IMR-90 (cell line): ENCODE measurements at regions of chr22 and their contacts with region 1.

Region 1: DNA sequence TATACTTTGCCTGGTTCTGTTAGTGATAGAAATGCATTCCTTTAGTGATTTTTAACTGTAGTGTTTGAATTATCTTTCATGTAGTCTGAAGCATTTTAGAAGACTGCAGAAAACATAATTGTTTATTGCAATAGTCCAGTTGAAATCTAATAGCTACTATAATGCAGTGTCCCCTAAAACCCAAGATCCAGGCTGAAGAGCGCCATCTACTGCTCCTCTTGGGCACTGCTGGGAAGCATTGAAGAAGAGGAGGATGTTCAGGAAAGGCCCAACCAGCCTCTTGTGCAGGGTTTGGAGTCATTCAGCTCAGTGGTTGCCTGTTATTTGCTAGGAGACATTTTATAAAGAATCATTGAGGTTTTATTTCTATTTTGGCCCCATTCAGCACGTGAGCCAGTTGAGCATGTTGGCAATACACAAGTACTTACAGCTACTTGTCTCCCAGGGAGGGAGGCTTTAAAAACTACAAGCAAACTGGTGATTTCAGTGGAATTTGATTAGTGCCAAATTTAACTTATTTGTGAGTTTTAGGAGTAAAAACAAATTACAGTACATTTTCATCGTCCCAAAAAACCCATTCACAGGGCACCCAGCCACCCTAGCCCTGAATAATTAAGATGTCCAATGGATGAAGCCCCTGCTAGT is 74.9 kb upstream of the HORMAD2 start:
- DNase-seq: peak; percentile 68
- ATAC-seq: peak; percentile 88
- H3K4me3 ChIP-seq: no peak overlapping the region
- H3K27ac ChIP-seq: no peak overlapping the region
- H3K4me1 ChIP-seq: peaks cover 8% of the 10 kb centered on the region
- H3K27me3 ChIP-seq: no peaks in the 10 kb centered on the region
- CTCF ChIP-seq: peak; percentile 95
- POLR2A ChIP-seq: no peak; the same call in 1 of the 2 replicates
- RAD21 ChIP-seq: peak; percentile 95

Region 2: DNA sequence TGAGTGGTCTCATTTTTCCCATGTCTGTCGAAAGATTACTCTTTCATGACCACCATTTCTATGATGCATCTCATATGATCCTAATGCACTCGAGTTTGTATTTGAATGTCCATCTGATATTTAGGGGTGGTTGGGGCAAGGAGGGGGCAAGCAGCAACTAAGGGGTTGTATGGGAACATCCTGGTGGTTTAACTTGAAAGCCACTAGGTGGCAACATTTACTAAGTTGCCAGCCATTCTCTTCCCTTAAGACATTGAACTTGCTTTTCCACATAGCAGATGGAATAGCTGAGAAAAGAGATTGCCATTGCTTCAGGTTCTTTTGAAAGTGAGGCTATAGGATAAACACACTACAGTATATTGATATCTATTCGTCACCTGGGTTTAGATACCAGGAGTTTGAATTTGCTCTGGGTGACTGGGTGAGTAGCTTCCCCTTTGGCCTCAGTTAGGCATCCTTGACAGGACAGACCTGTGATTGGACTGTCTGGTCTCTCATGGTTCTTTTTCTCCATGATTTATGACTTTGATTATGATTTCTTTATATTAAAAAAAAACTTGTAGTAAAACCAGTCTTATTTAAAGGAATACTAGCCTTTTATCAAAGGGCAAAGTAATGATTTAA is 369.5 kb before region 1 on chr22:
- CTCF ChIA-PET with region 1: no interaction called
- POLR2A ChIA-PET with region 1: no interaction called
- dilution Hi-C with region 1: no loop called
- in situ Hi-C with region 1: loop called (anchors 10 kb)
- intact Hi-C with region 1: no loop called
- DNase-seq: peak; percentile 73
- ATAC-seq: peak; percentile 88
- H3K4me3 ChIP-seq: no peak overlapping the region
- H3K27ac ChIP-seq: no peak overlapping the region
- H3K4me1 ChIP-seq: peaks cover 8% of the 10 kb centered on the region
- H3K27me3 ChIP-seq: no peaks in the 10 kb centered on the region
- CTCF ChIP-seq: peak; percentile 72
- POLR2A ChIP-seq: no peak
- RAD21 ChIP-seq: peak; percentile 73

Region 3: DNA sequence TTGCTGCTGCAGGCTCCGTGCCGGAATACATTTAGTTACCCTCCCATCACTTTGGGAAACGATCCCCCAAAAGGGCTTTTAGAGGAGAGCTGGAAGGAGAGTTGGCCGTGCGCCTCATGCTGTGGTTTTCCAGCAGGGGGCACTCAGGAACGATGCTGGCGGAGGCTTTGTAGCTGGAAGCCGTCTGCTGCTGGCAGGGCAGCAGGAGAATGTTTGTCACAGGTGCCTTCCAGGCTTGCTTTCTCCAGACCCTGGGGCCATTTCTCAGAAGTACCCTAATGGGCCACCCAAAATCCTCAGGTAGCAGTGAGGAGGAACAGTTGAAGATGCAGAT is 315.5 kb before region 1 on chr22:
- CTCF ChIA-PET with region 1: interaction called, 3 read pairs
- POLR2A ChIA-PET with region 1: no interaction called
- dilution Hi-C with region 1: no loop called
- in situ Hi-C with region 1: no loop called
- intact Hi-C with region 1: loop called (anchors 2 kb)
- DNase-seq: peak; percentile 55
- ATAC-seq: peak; percentile 82
- H3K4me3 ChIP-seq: no peak overlapping the region
- H3K27ac ChIP-seq: no peak overlapping the region
- H3K4me1 ChIP-seq: 0 out of 2 replicates have a peak, but pooled peaks cover 2% of the 10 kb centered on the region
- H3K27me3 ChIP-seq: no peaks in the 10 kb centered on the region
- CTCF ChIP-seq: peak; percentile 74
- POLR2A ChIP-seq: no peak
- RAD21 ChIP-seq: peak; percentile 78

Region 4: GRCh38 chr22:29772170-29772641 is 233.1 kb before region 1 on chr22:
- CTCF ChIA-PET with region 1: interaction called, 6 read pairs
- POLR2A ChIA-PET with region 1: no interaction called
- dilution Hi-C with region 1: no loop called
- in situ Hi-C with region 1: no loop called
- intact Hi-C with region 1: loop called (anchors 1 kb)
- DNase-seq: peak; percentile 76
- ATAC-seq: peak; percentile 79
- H3K4me3 ChIP-seq: no peak overlapping the region
- H3K27ac ChIP-seq: no peak overlapping the region
- H3K4me1 ChIP-seq: peaks cover 10% of the 10 kb centered on the region; the same call in 1 of the 2 replicates
- H3K27me3 ChIP-seq: no peaks in the 10 kb centered on the region
- CTCF ChIP-seq: peak; percentile 61
- POLR2A ChIP-seq: no peak
- RAD21 ChIP-seq: peak; percentile 59

Region 5: DNA sequence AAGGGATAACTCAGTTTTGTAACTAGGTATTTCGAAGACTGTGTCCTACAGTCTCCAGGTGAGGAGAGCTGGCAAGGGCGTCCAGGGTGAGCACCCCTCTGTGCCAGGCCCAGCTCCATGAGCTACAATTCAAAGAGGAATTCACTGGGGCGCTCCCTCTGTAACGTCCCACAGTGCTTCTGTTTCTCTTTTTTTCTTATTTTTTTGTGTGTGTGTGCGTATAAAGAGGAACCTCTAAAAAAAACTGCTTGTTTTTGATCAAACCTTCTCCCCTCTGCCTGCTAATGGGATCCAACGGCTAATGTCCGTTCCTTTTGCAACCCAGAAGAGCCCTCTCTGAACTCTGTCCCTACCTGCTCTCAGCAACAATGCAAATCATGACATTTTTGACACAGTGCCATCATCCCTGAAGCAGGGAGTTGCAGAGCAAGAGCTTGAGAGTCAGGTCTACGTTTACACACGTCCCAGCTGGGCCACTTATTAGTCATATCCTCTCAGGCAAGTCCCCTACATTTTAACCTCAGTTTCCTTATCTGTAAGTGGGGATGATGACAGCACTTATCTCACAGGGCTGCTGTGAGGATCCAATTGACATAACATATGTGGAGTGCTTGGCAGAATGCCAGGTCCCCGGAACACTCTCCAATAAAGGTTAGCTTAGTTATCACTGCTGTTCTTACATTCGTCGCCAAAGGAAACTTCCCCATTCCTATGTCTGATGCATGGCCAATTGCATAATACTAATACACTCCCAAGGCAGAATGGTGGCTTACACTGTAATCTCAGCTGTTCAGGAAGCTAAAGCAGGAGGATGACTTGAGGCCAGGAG is 184.2 kb before region 1 on chr22:
- CTCF ChIA-PET with region 1: interaction called, 5 read pairs
- POLR2A ChIA-PET with region 1: no interaction called
- dilution Hi-C with region 1: no loop called
- in situ Hi-C with region 1: no loop called
- intact Hi-C with region 1: loop called (anchors 1 kb)
- DNase-seq: peak; percentile 98
- ATAC-seq: peak; percentile 92
- H3K4me3 ChIP-seq: no peak overlapping the region
- H3K27ac ChIP-seq: no peak overlapping the region
- H3K4me1 ChIP-seq: peaks cover 2% of the 10 kb centered on the region; the same call in 1 of the 2 replicates
- H3K27me3 ChIP-seq: no peaks in the 10 kb centered on the region
- CTCF ChIP-seq: no peak
- POLR2A ChIP-seq: no peak
- RAD21 ChIP-seq: no peak

Region 6: GRCh38 chr22:29837780-29838598 is 167.3 kb before region 1 on chr22 and contains the start of gene ASCC2:
- CTCF ChIA-PET with region 1: interaction called, 3 read pairs
- POLR2A ChIA-PET with region 1: no interaction called
- dilution Hi-C with region 1: no loop called
- in situ Hi-C with region 1: no loop called
- intact Hi-C with region 1: loop called (anchors 5 kb)
- DNase-seq: peak; percentile 92
- ATAC-seq: peak; percentile 98
- H3K4me3 ChIP-seq: peak within 1 kb of the TSS; percentile 81
- H3K27ac ChIP-seq: peak within 1 kb of the TSS; percentile 60
- H3K4me1 ChIP-seq: 0 out of 2 replicates have a peak, but pooled peaks cover 2% of the 10 kb centered on the region
- H3K27me3 ChIP-seq: no peaks in the 10 kb centered on the region
- CTCF ChIP-seq: no peak
- POLR2A ChIP-seq: peak; percentile 44; the same call in 1 of the 2 replicates
- RAD21 ChIP-seq: no peak
- total RNA-seq, gene ASCC2: 38.6 and 40.0 TPM in 2 replicates

Region 7: DNA sequence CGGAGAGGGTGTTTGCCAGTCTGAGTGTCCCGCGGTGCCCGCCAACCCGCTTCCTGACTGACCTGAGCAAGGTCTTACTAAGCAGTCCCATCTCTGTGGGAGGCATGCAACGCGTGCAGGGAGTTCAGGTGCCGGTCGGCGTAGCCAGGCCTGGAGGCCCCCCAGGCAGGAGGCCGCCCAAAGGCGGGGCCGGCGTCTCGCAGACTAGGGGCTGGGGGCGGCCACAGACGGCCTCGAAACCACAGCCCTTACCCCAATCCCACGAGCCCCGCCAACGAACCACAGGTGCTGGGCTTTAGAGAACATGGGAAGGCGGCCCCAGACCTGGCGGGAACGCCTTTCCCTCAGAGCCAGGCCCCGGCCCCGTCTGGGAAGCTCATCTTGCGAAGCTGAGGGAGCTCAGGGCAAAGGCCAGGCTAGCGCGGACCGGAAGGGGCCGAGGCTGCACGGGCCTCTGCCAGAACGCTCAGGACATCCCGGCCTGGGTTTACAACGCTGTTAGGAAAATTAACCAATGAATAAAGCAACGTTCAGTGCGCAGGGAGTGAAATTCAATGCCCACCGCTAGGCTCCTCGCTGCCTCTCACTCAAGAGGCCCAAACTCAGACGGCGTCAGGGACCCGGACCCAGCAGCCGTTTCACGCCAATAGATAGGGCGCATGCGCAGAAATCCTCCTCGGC is 418.1 kb after region 1 on chr22:
- CTCF ChIA-PET with region 1: no interaction called
- POLR2A ChIA-PET with region 1: no interaction called
- dilution Hi-C with region 1: no loop called
- in situ Hi-C with region 1: no loop called
- intact Hi-C with region 1: no loop called
- DNase-seq: no peak
- ATAC-seq: peak; percentile 41
- H3K4me3 ChIP-seq: peak overlapping the region; percentile 48
- H3K27ac ChIP-seq: peak overlapping the region; percentile 92
- H3K4me1 ChIP-seq: peaks cover 24% of the 10 kb centered on the region
- H3K27me3 ChIP-seq: no peaks in the 10 kb centered on the region
- CTCF ChIP-seq: no peak
- POLR2A ChIP-seq: peak; percentile 78
- RAD21 ChIP-seq: no peak